ENCODE measurements at regions of chr1 and their contacts with region 1.

Region 1: GRCh38 chr1:203643213-203644045 is 16.8 kb downstream of the ATP2B4 start:
- DNase-seq: no peak
- ATAC-seq: peak; percentile 31 to 35

Region 2: DNA sequence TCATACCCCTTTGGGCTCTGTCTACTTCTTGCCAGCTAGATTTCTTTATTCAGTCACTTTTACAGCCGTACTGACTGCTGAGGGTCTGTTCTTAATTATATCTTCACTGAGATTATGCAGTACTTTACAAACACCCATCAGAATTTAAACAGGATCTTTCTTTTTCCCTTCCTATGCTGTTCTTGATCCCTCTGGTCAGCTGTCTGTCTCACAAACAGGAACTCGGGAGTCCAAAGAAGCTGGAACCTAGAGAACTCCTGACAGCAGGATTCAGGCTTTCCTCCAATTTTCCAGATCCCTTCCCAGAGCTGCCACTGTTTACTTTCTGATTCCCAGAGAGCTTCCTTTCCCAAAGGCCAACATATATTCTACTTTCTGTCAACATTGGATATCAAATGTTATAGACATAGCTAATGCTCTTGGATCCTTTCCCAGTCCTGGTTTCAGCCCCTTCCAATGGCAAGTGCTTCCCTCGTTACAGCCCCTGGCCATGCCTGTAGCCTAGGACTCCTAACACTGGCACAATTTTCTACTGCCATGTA is 42.7 kb after region 1 on chr1:
- intact Hi-C with region 1: loop called in 1 of 2 experiments (anchors 5 kb)
- DNase-seq: no peak
- ATAC-seq: peak; percentile 22 to 47